ENCODE measurements at regions of chr17 and their contacts with region 1.

Region 1: GRCh38 chr17:43360739-43361505 is 37.9 kb upstream of the ARL4D start:
- DNase-seq: peak; percentile 99
- ATAC-seq: peak; percentile 92
- H3K4me3 ChIP-seq: peak overlapping the region; percentile 63 to 71 (median 67)
- H3K27ac ChIP-seq: peak overlapping the region; percentile 98
- H3K4me1 ChIP-seq: peaks cover 28% of the 10 kb centered on the region
- H3K27me3 ChIP-seq: no peaks in the 10 kb centered on the region; a peak in 1 of 5 replicates
- CTCF ChIP-seq: no peak
- EP300 ChIP-seq: peak; percentile 69 to 70
- POLR2A ChIP-seq: peak; percentile 100
- RAD21 ChIP-seq: peak; percentile 99

Region 2: GRCh38 chr17:43330876-43331639 is 29.9 kb before region 1 on chr17:
- CTCF ChIA-PET with region 1: no interaction called
- POLR2A ChIA-PET with region 1: interaction called, 63 read pairs
- in situ Hi-C with region 1: no loop called
- intact Hi-C with region 1: no loop called
- DNase-seq: no peak
- ATAC-seq: no peak
- H3K4me3 ChIP-seq: no peak overlapping the region
- H3K27ac ChIP-seq: no peak overlapping the region
- H3K4me1 ChIP-seq: peaks cover 42% of the 10 kb centered on the region
- H3K27me3 ChIP-seq: no peaks in the 10 kb centered on the region
- CTCF ChIP-seq: peak; percentile 39
- EP300 ChIP-seq: no peak
- POLR2A ChIP-seq: no peak
- RAD21 ChIP-seq: no peak

Region 3: DNA sequence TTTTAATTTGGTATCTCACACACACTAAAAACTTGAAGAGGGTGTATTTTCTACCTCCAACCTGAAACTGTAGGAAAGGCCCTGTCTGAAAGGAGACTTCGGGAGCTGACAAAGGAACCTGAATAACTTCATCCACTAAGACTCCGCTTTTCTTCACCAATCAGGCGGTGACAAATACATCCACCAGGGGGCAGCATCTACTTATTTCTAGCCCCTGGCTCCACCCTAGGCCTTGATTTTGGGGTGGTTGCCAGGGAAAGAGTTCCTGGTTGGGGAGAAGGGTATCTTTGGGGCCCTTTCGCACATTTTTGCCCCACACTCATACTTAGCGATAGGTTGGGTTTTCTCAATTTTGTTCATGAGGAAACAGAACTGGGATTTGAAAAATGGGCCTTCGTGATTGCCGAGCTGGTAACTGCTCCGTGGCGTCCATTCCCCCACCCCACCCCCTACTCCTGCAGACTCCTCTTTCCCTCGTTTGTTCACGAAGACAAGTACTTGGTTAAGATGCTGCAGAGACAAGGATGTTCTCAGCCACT is 33.1 kb after region 1 on chr17:
- CTCF ChIA-PET with region 1: no interaction called
- POLR2A ChIA-PET with region 1: interaction called, 185 read pairs
- in situ Hi-C with region 1: no loop called
- intact Hi-C with region 1: no loop called
- DNase-seq: peak; percentile 83
- ATAC-seq: peak; percentile 60
- H3K4me3 ChIP-seq: no peak overlapping the region
- H3K27ac ChIP-seq: peak overlapping the region; percentile 55
- H3K4me1 ChIP-seq: peaks cover 64% of the 10 kb centered on the region
- H3K27me3 ChIP-seq: no peaks in the 10 kb centered on the region
- CTCF ChIP-seq: peak; percentile 96
- EP300 ChIP-seq: 0 out of 4 replicates have a peak, but pooled peaks of 1 of the 2 experiments have one; percentile 11
- POLR2A ChIP-seq: no peak
- RAD21 ChIP-seq: peak; percentile 99

Region 4: GRCh38 chr17:43467981-43468581 is 107.2 kb after region 1 on chr17:
- CTCF ChIA-PET with region 1: no interaction called
- POLR2A ChIA-PET with region 1: interaction called, 12 read pairs
- in situ Hi-C with region 1: no loop called
- intact Hi-C with region 1: no loop called
- DNase-seq: no peak
- ATAC-seq: no peak
- H3K4me3 ChIP-seq: no peak overlapping the region
- H3K27ac ChIP-seq: peak overlapping the region; percentile 94
- H3K4me1 ChIP-seq: peaks cover 79% of the 10 kb centered on the region
- H3K27me3 ChIP-seq: no peaks in the 10 kb centered on the region
- CTCF ChIP-seq: no peak
- EP300 ChIP-seq: no peak
- POLR2A ChIP-seq: no peak
- RAD21 ChIP-seq: no peak

Region 5: DNA sequence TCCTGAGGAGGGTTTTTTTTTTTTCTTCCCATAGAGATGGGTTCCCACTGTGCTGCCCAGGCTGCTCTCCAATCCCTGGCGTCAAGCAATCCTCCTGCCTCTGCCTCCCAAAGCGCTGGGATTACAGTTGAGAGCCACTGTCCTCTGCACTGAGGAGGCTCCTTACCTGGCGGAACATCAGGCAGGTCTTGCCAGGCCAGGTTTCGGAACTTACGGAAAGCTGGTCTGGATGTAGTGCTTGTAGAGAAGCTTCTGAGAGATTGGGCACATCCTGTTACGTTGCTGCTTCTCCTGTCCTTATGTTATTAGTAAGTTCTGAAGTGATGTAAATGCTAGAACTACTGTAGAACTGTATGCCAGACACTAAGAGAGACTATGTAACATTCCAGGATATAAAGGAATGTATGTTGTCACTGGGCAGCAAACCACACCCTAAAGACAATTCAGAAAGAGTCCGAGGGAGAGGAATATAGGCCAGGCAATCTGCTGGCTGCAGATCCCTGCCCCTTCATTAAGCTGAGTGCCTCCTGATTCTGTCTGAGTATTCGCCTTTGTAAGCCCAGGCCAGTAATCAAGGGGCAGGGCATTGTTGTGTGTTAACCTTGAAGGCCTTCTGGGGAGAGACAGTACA is 164.1 kb after region 1 on chr17:
- CTCF ChIA-PET with region 1: no interaction called
- POLR2A ChIA-PET with region 1: interaction called, 17 read pairs
- in situ Hi-C with region 1: no loop called
- intact Hi-C with region 1: no loop called
- DNase-seq: no peak
- ATAC-seq: peak; percentile 1
- H3K4me3 ChIP-seq: no peak overlapping the region
- H3K27ac ChIP-seq: peak overlapping the region; percentile 96
- H3K4me1 ChIP-seq: peaks cover 68% of the 10 kb centered on the region
- H3K27me3 ChIP-seq: no peaks in the 10 kb centered on the region
- CTCF ChIP-seq: no peak
- EP300 ChIP-seq: no peak
- POLR2A ChIP-seq: no peak
- RAD21 ChIP-seq: no peak

Measured in HepG2 (cell line).